H1 (cell line): ENCODE measurements at regions of chr10 and their contacts with region 1.

Region 1: DNA sequence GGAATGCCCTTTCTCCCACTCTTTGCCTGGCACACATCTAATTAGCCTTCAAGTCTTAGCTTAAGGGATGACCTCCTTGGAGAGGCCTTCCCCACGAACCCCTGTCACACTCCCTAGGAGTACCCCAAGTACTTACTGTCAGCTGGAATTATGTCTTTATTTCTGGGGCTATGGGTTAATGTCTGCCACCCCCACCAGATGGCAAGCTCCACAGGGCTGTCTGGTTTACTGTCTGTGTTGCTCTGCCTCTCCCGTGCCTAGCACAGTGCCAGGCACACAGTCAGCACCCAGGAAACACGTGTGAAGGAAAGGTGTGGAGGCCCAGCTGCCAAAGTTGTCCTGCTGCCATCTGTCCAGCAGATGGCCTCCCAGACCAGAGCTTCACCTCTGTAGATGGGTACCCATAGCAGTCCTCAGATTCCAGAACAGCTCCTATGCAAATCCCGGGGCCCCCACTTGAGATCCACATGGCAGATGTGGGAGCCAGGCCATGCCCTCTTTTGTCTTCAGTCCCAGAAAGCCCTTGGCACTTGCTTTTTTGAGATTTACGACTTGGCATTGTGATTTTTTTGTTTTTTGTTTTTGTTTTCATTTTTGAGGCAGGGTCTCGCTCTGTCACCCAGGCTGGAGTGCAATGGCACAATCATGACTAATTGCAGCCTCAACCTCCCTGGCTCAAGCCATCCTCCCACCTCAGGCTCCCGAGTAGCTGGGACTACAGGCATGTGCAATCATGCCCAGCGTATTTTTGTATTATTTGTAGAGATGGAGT is 17.2 kb upstream of the PALD1 start:
- DNase-seq: no peak
- H3K4me3 ChIP-seq: no peak overlapping the region
- H3K27ac ChIP-seq: no peak overlapping the region
- H3K4me1 ChIP-seq: peaks cover 3 to 27% (median 14%) of the 10 kb centered on the region in 4 experiments
- H3K27me3 ChIP-seq: peaks cover 21 to 42% (median 39%) of the 10 kb centered on the region in 4 experiments
- CTCF ChIP-seq: peak; percentile 95
- EP300 ChIP-seq: no peak
- POLR2A ChIP-seq: no peak
- RAD21 ChIP-seq: peak; percentile 98 to 100

Region 2: GRCh38 chr10:70381471-70382421 is 79.7 kb before region 1 on chr10:
- CTCF ChIA-PET with region 1: interaction called, 15 read pairs
- POLR2A ChIA-PET with region 1: interaction called, 4 read pairs
- DNase-seq: peak in 1 of 2 experiments; percentile 89
- H3K4me3 ChIP-seq: peak overlapping the region; percentile 76 to 88 (median 80)
- H3K27ac ChIP-seq: peak overlapping the region; percentile 43; the same call in 1 of the 2 replicates
- H3K4me1 ChIP-seq: peaks cover 0 to 7% (median under 1%) of the 10 kb centered on the region in 4 experiments; a peak in 4 of 7 replicates
- H3K27me3 ChIP-seq: peaks cover 0 to 18% (median 7%) of the 10 kb centered on the region in 4 experiments; a peak in 4 of 7 replicates
- CTCF ChIP-seq: no peak
- EP300 ChIP-seq: no peak
- POLR2A ChIP-seq: no peak
- RAD21 ChIP-seq: no peak

Region 3: DNA sequence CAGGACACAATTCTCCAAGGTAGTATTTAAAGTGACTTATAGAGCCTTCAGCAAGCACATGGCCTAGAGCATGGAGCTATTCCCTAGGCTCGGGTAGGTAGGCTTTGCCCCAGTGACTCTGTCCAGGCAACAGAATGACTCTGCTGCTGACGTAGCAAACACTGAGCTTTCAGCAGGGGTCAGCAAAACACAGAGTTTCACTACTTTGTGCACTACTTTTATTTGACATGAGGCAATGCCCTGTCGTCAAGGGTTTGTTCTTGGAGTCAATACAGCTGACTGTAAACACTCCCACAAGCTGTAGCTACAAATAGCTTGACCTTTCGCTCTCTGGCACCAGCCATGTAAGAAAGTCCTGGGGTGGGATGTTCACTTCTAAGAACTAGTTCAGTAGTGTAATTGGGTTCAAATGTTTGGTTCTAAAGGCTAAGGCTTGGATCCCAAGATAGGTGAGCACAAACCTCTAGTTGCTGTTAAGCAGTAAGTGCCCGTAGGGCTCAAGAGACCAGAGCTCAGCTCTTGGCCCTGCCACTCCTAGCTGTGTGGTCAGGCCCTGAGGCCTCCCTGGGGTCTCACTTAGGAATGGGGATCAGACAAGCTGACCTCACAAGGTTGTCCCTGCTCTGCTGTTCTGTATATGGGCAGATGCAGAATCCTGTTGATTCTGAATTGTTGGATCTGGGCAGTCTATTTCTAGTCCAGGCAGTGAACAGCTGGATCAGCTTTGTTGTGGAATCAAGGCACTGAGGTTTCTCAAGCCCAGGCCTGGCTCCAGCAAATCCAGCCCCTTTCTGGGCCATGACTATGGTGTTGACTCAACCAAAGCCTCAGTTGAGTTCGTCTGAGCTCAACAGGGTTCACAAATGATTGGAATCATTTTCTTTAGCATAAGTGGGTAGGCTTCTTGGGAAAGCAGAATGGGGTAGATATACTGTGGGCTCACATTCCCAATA is 30.6 kb before region 1 on chr10:
- CTCF ChIA-PET with region 1: interaction called, 67 read pairs
- POLR2A ChIA-PET with region 1: interaction called, 3 read pairs
- DNase-seq: no peak
- H3K4me3 ChIP-seq: no peak overlapping the region
- H3K27ac ChIP-seq: no peak overlapping the region
- H3K4me1 ChIP-seq: no peaks in the 10 kb centered on the region; a peak in 1 of 7 replicates
- H3K27me3 ChIP-seq: no peaks in the 10 kb centered on the region
- CTCF ChIP-seq: peak in 2 of 3 experiments; percentile 30 to 46; a peak in 2 of 4 replicates
- EP300 ChIP-seq: no peak
- POLR2A ChIP-seq: no peak
- RAD21 ChIP-seq: peak; percentile 54 to 66

Region 4: GRCh38 chr10:70445718-70446657 is 15.4 kb before region 1 on chr10:
- CTCF ChIA-PET with region 1: interaction called, 28 read pairs
- POLR2A ChIA-PET with region 1: interaction called, 28 read pairs
- DNase-seq: no peak
- H3K4me3 ChIP-seq: no peak overlapping the region
- H3K27ac ChIP-seq: no peak overlapping the region
- H3K4me1 ChIP-seq: peaks cover 10 to 26% (median 21%) of the 10 kb centered on the region in 4 experiments
- H3K27me3 ChIP-seq: peaks cover 5 to 21% (median 17%) of the 10 kb centered on the region in 4 experiments; a peak in 6 of 7 replicates
- CTCF ChIP-seq: no peak
- EP300 ChIP-seq: no peak
- POLR2A ChIP-seq: no peak
- RAD21 ChIP-seq: no peak

Region 5: DNA sequence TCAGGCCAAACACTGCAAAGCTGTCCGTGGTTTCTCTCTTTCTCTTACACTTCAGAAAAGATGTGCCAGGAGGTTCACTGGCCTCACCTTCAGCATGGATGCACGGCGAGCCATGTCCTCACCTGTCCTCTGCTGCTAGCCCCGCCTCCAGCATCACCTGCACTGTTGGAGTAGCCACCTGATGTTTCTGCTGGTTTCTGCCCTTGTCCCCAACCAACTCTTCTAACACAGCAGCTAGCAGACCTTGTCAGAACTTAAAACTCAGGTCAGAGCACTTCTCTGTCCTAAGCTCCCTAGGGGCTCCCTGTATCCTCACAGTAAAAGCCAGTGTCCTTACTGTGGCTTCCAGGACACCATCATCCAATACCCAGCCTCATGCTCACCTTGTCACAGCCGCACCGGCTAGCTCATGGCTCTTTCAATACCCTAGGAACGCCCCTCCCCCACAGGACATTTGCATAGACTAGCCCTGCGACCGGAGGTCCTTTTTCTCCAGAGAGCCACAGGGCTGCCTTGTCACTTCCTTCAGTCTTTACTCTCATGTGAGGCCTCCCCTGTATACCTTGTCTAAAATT is 32.3 kb after region 1 on chr10:
- CTCF ChIA-PET with region 1: interaction called, 17 read pairs
- POLR2A ChIA-PET with region 1: interaction called, 5 read pairs
- DNase-seq: peak in 1 of 2 experiments; percentile 81
- H3K4me3 ChIP-seq: peak overlapping the region in 1 of 4 experiments; percentile 7; a peak in 3 of 8 replicates
- H3K27ac ChIP-seq: peak overlapping the region; percentile 13; the same call in 1 of the 2 replicates
- H3K4me1 ChIP-seq: peaks cover 13 to 31% (median 19%) of the 10 kb centered on the region in 4 experiments
- H3K27me3 ChIP-seq: no peaks in the 10 kb centered on the region
- CTCF ChIP-seq: no peak
- EP300 ChIP-seq: no peak
- POLR2A ChIP-seq: no peak; a peak in 1 of 3 replicates
- RAD21 ChIP-seq: no peak

Region 6: GRCh38 chr10:70508912-70509756 is 47.7 kb after region 1 on chr10:
- CTCF ChIA-PET with region 1: interaction called, 23 read pairs
- POLR2A ChIA-PET with region 1: no interaction called
- DNase-seq: peak in 1 of 2 experiments; percentile 60
- H3K4me3 ChIP-seq: no peak overlapping the region
- H3K27ac ChIP-seq: no peak overlapping the region
- H3K4me1 ChIP-seq: peaks cover 0 to 26% (median 19%) of the 10 kb centered on the region in 4 experiments; a peak in 6 of 7 replicates
- H3K27me3 ChIP-seq: no peaks in the 10 kb centered on the region; a peak in 2 of 7 replicates
- CTCF ChIP-seq: no peak
- EP300 ChIP-seq: no peak
- POLR2A ChIP-seq: no peak
- RAD21 ChIP-seq: no peak; a peak in 1 of 4 replicates

Region 7: DNA sequence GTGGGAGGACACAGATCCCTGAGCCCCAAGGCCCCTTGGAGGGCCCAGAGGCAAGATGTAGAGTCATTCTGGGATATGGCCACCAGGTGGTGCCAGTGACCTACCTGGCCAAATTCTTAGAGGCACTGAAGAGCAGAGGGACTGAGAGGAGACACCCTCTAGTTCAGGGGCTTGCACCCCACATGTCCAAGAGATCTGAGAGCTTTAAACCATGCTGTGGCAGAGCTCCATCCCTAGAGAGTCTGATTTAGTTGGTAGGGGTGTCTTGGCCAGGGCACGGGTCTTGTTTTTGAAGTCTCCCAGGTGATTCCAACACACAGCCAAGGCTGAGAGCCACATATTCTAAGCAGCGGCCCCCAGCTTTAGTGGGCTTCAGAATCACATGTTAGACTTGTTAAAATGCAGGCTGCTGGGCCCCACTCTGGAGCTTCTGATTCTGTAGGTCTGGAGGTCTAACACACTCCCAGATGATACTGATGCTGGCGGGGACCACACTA is 88.6 kb after region 1 on chr10:
- CTCF ChIA-PET with region 1: interaction called, 908 read pairs
- POLR2A ChIA-PET with region 1: no interaction called
- DNase-seq: peak in 1 of 2 experiments; percentile 92
- H3K4me3 ChIP-seq: no peak overlapping the region
- H3K27ac ChIP-seq: no peak overlapping the region
- H3K4me1 ChIP-seq: no peaks in the 10 kb centered on the region; a peak in 1 of 7 replicates
- H3K27me3 ChIP-seq: no peaks in the 10 kb centered on the region
- CTCF ChIP-seq: peak; percentile 78 to 84 (median 82)
- EP300 ChIP-seq: no peak
- POLR2A ChIP-seq: no peak
- RAD21 ChIP-seq: peak; percentile 92 to 94

Region 8: DNA sequence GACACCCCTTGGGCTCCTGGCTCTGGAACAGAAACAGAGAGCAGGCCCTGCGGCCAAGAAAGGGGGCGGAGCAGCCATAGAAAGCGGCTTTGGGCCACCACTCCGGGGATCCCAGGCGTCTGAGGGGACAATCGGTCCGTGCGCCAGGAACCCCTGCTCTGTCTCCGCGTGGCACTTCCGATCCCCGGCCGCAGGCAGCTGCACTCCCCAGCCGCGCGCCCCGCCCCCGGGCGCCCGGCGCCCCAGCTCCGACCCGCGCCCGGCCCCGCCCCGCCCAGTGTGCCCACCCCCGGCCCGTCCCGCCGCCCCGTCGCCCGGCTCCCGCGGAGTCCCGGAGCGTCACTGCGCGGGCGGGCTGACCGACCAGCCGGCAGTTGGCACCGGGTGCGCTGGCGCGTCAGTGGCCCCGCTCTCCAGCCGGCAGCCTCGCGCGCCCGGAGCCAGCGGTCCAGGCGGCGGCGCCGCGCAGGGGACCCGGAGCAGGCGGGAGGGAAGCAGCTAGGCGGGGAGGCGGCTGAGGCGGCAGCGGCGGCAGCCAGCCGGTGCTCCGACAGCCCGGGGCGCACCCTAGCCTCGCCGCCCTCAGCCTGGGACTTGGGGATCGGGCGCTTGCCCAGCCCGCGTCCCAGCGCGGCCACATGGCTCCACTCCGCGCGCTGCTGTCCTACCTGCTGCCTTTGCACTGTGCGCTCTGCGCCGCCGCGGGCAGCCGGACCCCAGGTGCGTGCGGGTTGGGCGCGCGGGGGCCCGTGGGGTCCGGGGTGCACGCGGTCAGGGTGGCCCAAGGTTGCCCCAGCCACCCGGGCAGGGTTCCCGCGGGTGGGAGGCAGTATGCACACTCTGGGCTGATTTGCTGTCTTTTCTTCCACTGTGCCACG is 211.0 kb after region 1 on chr10 and contains the start of gene ADAMTS14:
- CTCF ChIA-PET with region 1: no interaction called
- POLR2A ChIA-PET with region 1: no interaction called
- DNase-seq: peak; percentile 13 to 69
- H3K4me3 ChIP-seq: peak within 1 kb of the TSS; percentile 24 to 60 (median 56)
- H3K27ac ChIP-seq: no peak within 1 kb of the TSS
- H3K4me1 ChIP-seq: peaks cover 3 to 11% (median 3%) of the 10 kb centered on the region in 4 experiments; a peak in 6 of 7 replicates
- H3K27me3 ChIP-seq: peaks cover 0 to 25% (median 14%) of the 10 kb centered on the region in 4 experiments; a peak in 6 of 7 replicates
- CTCF ChIP-seq: no peak
- EP300 ChIP-seq: no peak
- POLR2A ChIP-seq: no peak
- RAD21 ChIP-seq: no peak
- total RNA-seq, gene ADAMTS14: 2.3 TPM in 2 replicates

Region 9: DNA sequence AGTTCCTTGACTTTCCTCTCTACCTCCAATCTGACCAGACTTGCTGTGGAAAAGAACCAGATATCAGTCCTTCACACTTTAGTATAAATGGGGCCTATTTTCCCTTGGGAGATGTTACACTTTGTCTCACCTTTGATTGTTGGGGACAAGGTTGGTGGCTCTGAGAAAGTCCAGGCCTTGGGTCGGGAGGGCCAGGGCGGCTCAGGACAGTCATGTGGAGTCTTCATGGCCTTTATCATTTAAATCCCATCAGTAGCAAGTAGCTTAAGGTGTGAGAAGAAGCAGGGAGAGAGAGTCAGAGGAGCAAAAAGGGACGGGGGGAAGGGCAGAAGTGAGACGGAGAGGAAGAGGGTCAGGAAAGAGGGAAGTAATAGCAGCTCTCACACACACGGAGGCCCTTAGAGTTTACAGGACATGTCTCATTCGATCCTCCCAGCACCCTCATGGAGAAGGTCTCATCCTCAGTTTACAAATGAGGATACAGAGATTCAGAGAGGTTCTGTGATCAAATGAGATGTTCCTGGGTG is 283.3 kb after region 1 on chr10:
- CTCF ChIA-PET with region 1: no interaction called
- POLR2A ChIA-PET with region 1: no interaction called
- DNase-seq: no peak
- H3K4me3 ChIP-seq: no peak overlapping the region
- H3K27ac ChIP-seq: no peak overlapping the region
- H3K4me1 ChIP-seq: no peaks in the 10 kb centered on the region
- H3K27me3 ChIP-seq: no peaks in the 10 kb centered on the region
- CTCF ChIP-seq: no peak
- EP300 ChIP-seq: no peak
- POLR2A ChIP-seq: no peak
- RAD21 ChIP-seq: no peak

Region 10: DNA sequence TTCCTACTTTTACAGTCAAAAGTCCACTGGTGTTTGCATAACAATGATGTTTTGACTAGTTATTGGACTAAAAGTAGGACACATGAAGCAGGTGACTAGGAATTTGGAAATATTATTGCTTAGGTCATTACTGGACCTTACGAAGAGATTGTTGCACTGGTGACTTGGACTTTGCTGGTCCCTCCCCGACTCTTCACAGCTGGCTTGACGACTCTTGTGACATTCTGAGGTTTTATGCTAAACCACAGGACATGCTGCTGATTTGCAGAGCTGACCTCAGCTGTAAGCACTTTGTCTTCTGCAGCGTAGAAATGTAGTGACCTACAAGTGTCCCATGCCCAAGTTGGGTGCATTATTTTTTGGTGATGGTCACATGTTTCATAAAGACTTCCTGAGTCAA is 405.0 kb after region 1 on chr10:
- CTCF ChIA-PET with region 1: no interaction called
- POLR2A ChIA-PET with region 1: no interaction called
- DNase-seq: no peak
- H3K4me3 ChIP-seq: no peak overlapping the region
- H3K27ac ChIP-seq: no peak overlapping the region
- H3K4me1 ChIP-seq: no peaks in the 10 kb centered on the region
- H3K27me3 ChIP-seq: no peaks in the 10 kb centered on the region
- CTCF ChIP-seq: no peak
- EP300 ChIP-seq: no peak
- POLR2A ChIP-seq: no peak
- RAD21 ChIP-seq: no peak